ENCODE measurements at regions of chr9 and their contacts with region 1.

Region 1: DNA sequence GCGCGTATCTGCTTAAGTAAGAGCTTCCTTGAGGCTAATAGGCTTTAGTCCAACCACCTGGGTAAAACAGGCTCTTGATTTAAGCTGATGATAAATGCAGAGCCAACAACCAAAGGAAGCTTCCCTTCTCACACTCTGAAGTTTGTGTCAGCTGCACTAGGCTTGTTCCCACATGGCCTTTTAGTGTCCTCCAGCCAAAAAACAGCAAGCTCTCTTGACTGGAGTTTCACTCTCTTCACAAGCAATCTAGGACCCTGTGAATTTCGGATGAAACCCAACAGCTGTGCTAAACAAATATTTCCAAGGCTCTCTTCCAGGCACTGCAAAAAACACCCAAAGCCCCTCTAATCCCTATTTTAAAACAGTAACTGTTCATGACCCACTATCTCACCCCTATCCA is 63.9 kb downstream of the SAXO1 start:
- DNase-seq: no peak
- H3K4me3 ChIP-seq: no peak overlapping the region
- H3K27ac ChIP-seq: no peak overlapping the region
- H3K4me1 ChIP-seq: no peaks in the 10 kb centered on the region
- H3K27me3 ChIP-seq: no peaks in the 10 kb centered on the region
- CTCF ChIP-seq: no peak
- POLR2A ChIP-seq: no peak

Region 2: DNA sequence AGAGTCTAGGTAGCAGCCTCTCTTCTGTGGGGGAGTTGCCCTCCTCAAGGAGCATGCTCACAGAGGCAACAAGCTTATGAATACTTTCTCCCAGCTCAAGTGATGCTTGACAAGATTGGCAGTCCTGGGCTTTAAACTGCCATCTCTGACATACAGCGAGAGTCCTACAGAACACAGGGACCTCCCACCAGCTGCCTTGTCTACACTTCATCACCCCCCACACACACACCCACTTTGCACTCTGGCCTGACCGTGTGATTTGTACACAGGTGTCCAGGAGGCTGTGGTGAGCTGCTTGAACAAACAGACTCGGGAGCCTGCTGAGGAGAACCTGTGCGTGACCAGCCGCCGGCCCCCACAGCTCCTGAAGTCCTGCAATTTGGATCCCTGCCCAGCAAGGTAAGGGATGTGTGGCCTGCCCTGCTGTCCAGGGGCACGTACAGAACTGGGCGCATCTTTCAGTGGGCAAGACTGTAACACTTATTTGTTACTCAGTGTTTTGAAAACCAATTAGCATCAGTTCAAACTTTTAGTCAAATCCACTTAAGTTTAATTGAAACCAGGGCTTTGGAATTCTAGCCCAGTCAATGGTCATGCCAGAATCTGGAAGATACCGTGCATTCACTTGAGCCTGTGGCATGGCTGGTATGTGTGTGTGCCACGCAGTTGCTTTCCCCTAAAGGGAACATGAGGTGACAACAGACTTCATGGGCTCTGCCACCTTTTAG is 247.7 kb before region 1 on chr9:
- intact Hi-C with region 1: no loop called
- DNase-seq: peak; percentile 97 to 98
- H3K4me3 ChIP-seq: no peak overlapping the region
- H3K27ac ChIP-seq: peak overlapping the region; percentile 6 to 86 (median 84)
- H3K4me1 ChIP-seq: peaks cover 14 to 20% of the 10 kb centered on the region in 2 donors
- H3K27me3 ChIP-seq: no peaks in the 10 kb centered on the region
- CTCF ChIP-seq: no peak
- POLR2A ChIP-seq: no peak

Region 3: DNA sequence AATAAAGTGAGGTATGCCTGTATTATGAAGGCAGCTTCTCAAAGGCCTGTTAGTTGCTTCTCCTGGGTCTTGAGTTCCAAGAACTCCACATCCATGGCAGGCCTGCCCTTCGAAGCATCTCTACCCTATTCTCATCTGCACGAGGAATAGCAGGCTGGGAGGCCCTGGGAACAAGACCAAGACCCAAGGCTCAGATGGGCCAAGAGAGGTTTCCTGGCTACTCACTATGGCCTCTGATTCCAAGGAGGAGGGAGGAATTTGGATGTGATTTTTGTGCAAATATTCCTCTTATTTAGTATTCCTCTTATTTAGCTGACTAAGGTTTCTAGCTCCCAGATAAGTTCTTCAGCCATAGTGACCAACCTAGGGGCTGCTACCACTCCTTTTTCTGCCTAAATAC is 87.4 kb before region 1 on chr9:
- intact Hi-C with region 1: loop called (anchors 5 kb)
- DNase-seq: no peak
- H3K4me3 ChIP-seq: no peak overlapping the region
- H3K27ac ChIP-seq: no peak overlapping the region
- H3K4me1 ChIP-seq: no peaks in the 10 kb centered on the region
- H3K27me3 ChIP-seq: no peaks in the 10 kb centered on the region
- CTCF ChIP-seq: no peak
- POLR2A ChIP-seq: no peak

Region 4: DNA sequence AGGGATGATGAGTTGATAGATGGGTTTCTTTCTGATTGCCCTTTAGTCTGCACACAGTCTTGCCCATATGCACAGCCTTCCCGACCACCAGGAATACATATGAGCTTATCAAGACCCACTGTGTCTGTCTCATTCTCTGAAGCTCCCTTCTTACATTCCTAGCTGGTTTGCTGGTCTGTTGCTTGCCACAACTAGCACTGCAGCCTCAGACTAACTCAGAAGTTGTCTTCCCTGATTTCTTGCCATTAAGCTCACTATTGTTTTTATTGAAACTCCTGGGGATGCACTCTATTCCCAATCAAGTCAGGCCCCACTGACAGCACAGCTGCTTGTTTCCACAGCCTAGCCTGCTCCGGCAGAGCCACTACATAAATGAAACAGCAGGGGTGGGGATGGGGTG is 33.6 kb before region 1 on chr9:
- intact Hi-C with region 1: no loop called
- DNase-seq: no peak
- H3K4me3 ChIP-seq: no peak overlapping the region
- H3K27ac ChIP-seq: no peak overlapping the region
- H3K4me1 ChIP-seq: no peaks in the 10 kb centered on the region
- H3K27me3 ChIP-seq: no peaks in the 10 kb centered on the region
- CTCF ChIP-seq: no peak
- POLR2A ChIP-seq: no peak

Measured in thyroid gland (tissue), 4 donors.